ENCODE measurements at regions of chr1 and their contacts with region 1.

Region 1: GRCh38 chr1:165871311-165872067 is 44.1 kb downstream of the UCK2 start:
- H3K4me3 Mint-ChIP-seq: peak overlapping the region; percentile 4
- H3K27ac Mint-ChIP-seq: peak overlapping the region; percentile 80
- H3K4me1 Mint-ChIP-seq: peaks cover 37% of the 10 kb centered on the region
- H3K27me3 Mint-ChIP-seq: no peaks in the 10 kb centered on the region

Region 2: GRCh38 chr1:165827268-165828102 is 44.0 kb before region 1 on chr1 and contains the start of gene UCK2:
- intact Hi-C with region 1: loop called (anchors 5 kb)
- H3K4me3 Mint-ChIP-seq: peak within 1 kb of the TSS; percentile 99
- H3K27ac Mint-ChIP-seq: peak within 1 kb of the TSS; percentile 87
- H3K4me1 Mint-ChIP-seq: peaks cover 15% of the 10 kb centered on the region
- H3K27me3 Mint-ChIP-seq: no peaks in the 10 kb centered on the region

Measured in dendritic cell treated with granulocyte-macrophage colony-stimulating factor and Interleukin-4, amounts not matched to agents 40 ng/mL and 50 ng/mL, for 4 days (primary cell).